Stomach (tissue), 19 donors: ENCODE measurements at regions of chr9 and their contacts with region 1.

Region 1: GRCh38 chr9:121399883-121400607 is 30.0 kb upstream of the STOM start:
- DNase-seq: peak in 1 of 2 donors; percentile 88
- H3K4me3 ChIP-seq: no peak overlapping the region
- H3K27ac ChIP-seq: no peak overlapping the region
- H3K4me1 ChIP-seq: peaks cover 0 to 8% (median 0%) of the 10 kb centered on the region in 4 donors
- H3K27me3 ChIP-seq: no peaks in the 10 kb centered on the region
- CTCF ChIP-seq: peak in 5 of 7 experiments; percentile 51 to 86 (median 69)
- EP300 ChIP-seq: no peak
- POLR2A ChIP-seq: no peak

Region 2: DNA sequence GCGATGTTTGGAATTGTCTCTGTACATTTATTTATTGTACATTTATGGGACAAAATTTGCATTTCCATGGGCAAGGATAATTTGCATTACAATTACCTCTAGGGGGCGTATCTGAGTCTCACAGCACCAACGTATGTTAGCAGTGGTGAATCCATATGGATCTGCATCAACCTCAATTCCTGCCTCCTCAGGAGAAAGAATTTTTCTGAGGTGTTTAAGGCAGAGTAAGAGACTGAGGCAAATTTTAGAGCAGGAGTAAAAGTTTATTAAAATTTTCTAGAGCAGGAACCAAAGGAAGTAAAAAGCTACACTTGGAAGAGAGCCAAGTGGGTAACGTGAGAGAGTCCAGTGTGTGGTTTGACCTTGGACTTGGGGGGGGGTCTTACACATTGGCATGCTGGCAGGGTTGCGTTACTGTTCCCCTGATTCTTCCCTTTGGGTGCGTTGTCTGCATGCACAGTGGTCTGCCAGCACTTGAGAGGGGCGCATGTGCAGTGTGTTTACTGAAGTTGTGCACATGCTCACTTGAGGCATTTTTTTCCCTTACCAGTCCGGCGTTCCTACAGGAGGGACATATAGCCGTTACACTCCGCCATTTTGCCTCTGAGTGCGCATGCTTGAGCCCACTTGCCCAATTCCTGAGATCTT is 177.4 kb before region 1 on chr9:
- intact Hi-C with region 1: loop called (anchors 5 kb)
- DNase-seq: peak in 1 of 2 donors; percentile 51
- H3K4me3 ChIP-seq: no peak overlapping the region
- H3K27ac ChIP-seq: no peak overlapping the region
- H3K4me1 ChIP-seq: peaks cover 0 to 11% (median 4%) of the 10 kb centered on the region in 4 donors
- H3K27me3 ChIP-seq: no peaks in the 10 kb centered on the region
- CTCF ChIP-seq: peak in 4 of 7 experiments; percentile 39 to 77 (median 58)
- EP300 ChIP-seq: no peak
- POLR2A ChIP-seq: no peak

Region 3: DNA sequence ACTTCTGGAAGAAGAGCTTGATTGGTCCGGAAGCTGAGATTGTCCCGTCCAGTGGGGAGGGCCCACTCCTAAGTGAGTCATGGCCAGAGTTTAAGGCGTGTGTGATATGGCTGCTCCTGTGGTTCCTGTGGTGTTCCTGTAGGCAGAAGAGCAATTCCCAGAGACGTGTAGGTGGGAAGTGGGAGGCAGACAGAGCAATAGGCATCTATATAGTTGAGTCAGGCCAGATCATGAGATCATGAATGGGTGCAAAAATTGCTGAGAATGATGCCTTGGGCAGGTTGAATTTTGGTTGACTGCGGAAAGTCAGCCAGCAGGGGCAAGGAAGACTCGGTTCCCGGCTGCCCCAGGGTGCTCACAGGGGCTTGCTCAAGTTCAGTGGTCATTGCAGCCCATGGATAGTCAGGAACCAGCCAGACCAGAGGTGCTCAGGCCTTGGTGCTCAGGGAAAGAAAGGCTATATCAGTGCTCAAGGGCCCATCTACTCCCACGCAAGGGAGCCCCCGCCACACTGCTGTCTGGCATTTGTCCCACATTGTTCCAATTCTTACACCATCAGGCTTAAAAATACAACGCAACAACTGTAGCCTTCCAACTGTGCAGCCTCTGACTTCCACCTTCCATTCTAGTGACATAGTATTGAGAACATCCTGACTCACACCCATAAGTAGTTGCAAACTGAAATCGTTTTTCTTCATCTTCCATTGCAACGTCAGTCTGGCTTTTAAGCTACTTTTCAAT is 153.1 kb before region 1 on chr9:
- intact Hi-C with region 1: no loop called
- DNase-seq: no peak
- H3K4me3 ChIP-seq: no peak overlapping the region
- H3K27ac ChIP-seq: no peak overlapping the region
- H3K4me1 ChIP-seq: no peaks in the 10 kb centered on the region
- H3K27me3 ChIP-seq: no peaks in the 10 kb centered on the region
- CTCF ChIP-seq: no peak
- EP300 ChIP-seq: no peak
- POLR2A ChIP-seq: no peak